ENCODE measurements at regions of chr3 and their contacts with region 1.

Region 1: GRCh38 chr3:32296256-32297204 is 58.0 kb downstream of the CMTM8 start:
- DNase-seq: peak; percentile 19 to 28
- ATAC-seq: peak; percentile 51 to 63
- H3K4me3 ChIP-seq: no peak overlapping the region
- H3K27ac ChIP-seq: no peak overlapping the region
- H3K4me1 ChIP-seq: no peaks in the 10 kb centered on the region
- H3K27me3 ChIP-seq: no peaks in the 10 kb centered on the region
- CTCF ChIP-seq: peak; percentile 61 to 90 (median 75)
- POLR2A ChIP-seq: no peak

Region 2: DNA sequence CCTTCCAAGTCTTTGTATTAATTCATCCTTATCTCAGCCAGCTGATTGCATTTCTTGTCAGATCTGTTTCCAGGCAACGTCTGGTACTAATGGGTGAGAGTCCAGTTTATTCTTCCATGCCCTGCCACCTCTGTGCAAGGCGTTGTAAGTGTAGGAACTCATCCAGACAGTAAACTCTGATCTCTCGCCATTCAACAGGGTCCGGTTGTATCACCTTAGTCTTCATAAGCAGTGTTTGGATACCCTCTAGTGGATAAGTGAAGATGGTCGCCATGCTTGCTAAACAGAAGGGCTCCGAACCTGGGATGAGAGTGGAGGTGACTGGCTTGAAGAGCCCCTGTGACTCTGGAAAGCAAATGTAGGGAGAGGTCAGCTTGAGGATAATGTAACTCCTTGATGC is 43.5 kb after region 1 on chr3:
- in situ Hi-C with region 1: no loop called
- intact Hi-C with region 1: loop called (anchors 5 kb)
- DNase-seq: no peak
- ATAC-seq: no peak
- H3K4me3 ChIP-seq: no peak overlapping the region
- H3K27ac ChIP-seq: no peak overlapping the region
- H3K4me1 ChIP-seq: no peaks in the 10 kb centered on the region
- H3K27me3 ChIP-seq: no peaks in the 10 kb centered on the region
- CTCF ChIP-seq: peak in 3 of 5 experiments; percentile 27 to 48 (median 36)
- POLR2A ChIP-seq: no peak

Region 3: GRCh38 chr3:32391643-32392535 is 95.4 kb after region 1 on chr3 and contains the start of gene CMTM7:
- in situ Hi-C with region 1: no loop called
- intact Hi-C with region 1: no loop called
- DNase-seq: peak; percentile 16 to 37
- ATAC-seq: peak; percentile 65 to 70
- H3K4me3 ChIP-seq: peak within 1 kb of the TSS; percentile 60 to 73 (median 67)
- H3K27ac ChIP-seq: peak within 1 kb of the TSS; percentile 47 to 72 (median 60)
- H3K4me1 ChIP-seq: no peaks in the 10 kb centered on the region
- H3K27me3 ChIP-seq: no peaks in the 10 kb centered on the region
- CTCF ChIP-seq: no peak
- POLR2A ChIP-seq: peak; percentile 46 to 62
- total RNA-seq, gene CMTM7: 1.1 to 3.3 (median 1.7) TPM

Measured in gastrocnemius medialis (tissue), 4 donors.